ENCODE measurements at regions of chr9 and their contacts with region 1.

Region 1: DNA sequence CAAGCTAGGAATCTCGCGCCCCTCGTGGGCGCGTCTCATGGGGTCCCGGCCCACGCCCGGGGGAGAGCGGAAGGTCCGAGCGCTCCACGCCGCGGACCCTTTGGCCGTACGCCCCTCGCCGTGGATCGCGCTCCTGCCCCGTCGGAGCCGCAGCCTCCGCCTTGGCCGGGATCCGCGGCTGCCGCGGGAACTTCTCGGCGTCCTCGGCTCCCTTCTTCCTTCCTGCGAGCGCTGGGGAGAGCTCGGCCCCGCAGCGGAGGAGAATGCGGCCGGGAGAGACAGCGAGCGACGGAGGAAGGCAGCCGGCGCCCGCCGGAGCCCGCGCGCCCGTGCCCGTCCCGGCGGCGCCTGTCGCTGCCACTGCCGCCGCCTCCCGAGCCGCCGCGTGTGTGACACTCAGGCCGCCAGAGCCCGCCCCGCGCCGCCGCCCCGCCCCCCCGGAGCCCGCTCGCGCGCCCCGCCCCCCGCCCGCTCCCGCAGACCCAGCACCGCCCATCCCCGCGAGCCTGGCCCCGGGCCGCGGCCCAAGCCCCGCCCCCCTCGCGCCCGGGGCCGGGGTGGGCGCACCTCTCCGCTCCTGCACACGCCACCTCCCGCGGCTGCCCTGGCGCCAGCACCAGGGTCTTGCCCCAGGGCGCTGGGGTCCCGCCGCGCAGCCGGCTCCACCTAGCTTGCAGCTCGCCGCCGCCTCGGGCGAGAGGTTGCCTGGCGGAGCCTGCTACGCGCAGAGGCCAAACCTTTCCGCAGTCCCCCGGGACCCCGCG is at the start of gene SHB:
- DNase-seq: peak; percentile 54 to 80 (median 75)
- ATAC-seq: peak; percentile 89
- H3K4me3 ChIP-seq: peak within 1 kb of the TSS; percentile 83
- H3K4me3 Mint-ChIP-seq: peak within 1 kb of the TSS; percentile 76 to 96 (median 88)
- H3K27ac ChIP-seq: peak within 1 kb of the TSS; percentile 76
- H3K27ac Mint-ChIP-seq: peak within 1 kb of the TSS in 8 of 9 donors; percentile 44 to 81 (median 73)
- H3K4me1 ChIP-seq: peaks cover 6 to 18% of the 10 kb centered on the region in 2 donors
- H3K4me1 Mint-ChIP-seq: peaks cover 5 to 39% (median 33%) of the 10 kb centered on the region in 7 donors
- H3K27me3 ChIP-seq: no peaks in the 10 kb centered on the region
- H3K27me3 Mint-ChIP-seq: peaks cover 0 to 58% (median 0%) of the 10 kb centered on the region in 5 donors
- total RNA-seq, gene SHB: 0.29 to 2.0 (median 0.81) TPM

Region 2: DNA sequence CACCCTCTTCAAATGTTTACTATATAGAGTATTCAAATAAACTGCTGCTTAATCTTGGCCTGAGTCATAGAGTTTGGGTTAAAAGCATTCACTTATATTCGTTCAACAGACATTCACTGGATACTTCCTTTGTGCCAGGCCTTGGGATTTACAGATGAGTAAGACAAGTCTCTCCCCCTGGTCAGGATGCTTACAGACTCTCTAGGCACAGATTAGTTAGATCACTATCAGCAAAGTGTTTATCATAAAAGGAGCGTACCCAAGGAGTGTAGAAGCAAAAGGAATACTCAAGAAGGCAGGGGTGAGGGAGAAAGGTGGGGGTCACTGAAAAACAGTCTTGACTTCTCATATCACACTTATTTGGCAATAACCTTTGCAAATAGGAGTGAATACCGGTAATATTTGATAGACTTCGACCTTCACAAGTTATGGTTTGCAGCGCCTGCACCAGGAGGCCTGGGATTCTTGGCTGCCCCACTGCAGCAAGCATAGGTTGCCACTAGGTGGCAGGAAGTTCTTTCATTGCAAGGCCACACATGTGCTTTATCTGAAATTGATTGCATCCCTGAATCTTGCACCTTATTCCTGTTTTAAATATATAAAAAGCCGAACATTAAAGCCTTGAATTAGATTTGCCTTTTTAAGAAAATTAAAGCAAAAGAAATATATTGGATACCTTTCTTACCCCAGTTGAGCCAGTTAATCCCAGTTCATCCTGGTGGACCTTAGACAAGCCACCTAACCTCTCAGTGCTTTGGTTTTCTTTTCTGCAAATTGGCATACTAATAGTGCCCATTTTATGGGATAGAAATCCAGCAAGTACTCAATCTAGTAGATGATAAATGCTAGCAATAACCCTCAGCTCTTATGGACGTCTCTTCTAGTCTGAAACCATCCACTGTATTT is 321.9 kb before region 1 on chr9:
- CTCF ChIA-PET with region 1: no interaction called
- POLR2A ChIA-PET with region 1: no interaction called
- intact Hi-C with region 1: loop called (anchors 5 to 10 kb)
- DNase-seq: peak in 8 of 9 donors; percentile 12 to 54 (median 39)
- ATAC-seq: peak; percentile 88
- H3K4me3 ChIP-seq: no peak overlapping the region
- H3K4me3 Mint-ChIP-seq: no peak overlapping the region
- H3K27ac ChIP-seq: no peak overlapping the region
- H3K27ac Mint-ChIP-seq: peak overlapping the region in 2 of 9 donors; percentile 59 to 62
- H3K4me1 ChIP-seq: no peaks in the 10 kb centered on the region
- H3K4me1 Mint-ChIP-seq: peaks cover 0 to 5% (median 4%) of the 10 kb centered on the region in 7 donors
- H3K27me3 ChIP-seq: no peaks in the 10 kb centered on the region
- H3K27me3 Mint-ChIP-seq: no peaks in the 10 kb centered on the region

Region 3: DNA sequence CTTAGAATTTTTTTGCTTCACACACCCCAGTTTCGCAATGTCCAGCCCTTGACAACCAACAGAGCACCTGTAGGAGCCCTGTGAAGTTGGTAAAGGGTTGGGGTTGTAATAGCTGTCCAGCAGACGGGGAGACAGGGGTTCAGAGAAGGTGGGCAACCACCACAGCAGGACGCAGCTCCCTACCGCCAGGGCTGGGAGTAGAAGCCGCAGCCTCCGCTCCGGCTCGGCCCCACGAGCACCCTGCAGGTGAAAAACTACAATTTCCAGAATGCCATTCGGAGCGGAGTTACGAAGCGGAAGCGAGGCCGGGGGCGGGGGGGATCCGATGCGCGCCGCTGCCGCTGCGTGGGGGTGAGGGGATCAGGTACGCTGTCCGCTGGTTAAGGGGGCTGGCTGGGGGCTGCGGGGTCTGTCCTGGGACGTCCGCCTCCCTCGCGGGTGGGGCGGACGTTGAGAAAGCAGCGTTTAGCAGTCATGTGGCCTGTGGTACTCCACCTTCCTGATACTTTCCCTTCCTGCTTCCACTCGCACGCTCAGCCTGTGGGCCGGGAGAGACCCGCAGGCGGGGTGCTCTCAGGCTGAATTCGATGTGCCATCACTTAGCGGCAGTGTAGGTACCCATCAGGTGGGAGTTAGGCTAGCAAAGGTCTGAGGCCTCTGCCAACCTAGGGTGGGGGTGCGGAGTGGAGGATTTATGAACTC is 315.4 kb before region 1 on chr9 and contains the start of gene TRMT10B:
- CTCF ChIA-PET with region 1: no interaction called
- POLR2A ChIA-PET with region 1: no interaction called
- intact Hi-C with region 1: loop called (anchors 5 to 10 kb)
- DNase-seq: peak; percentile 50 to 78 (median 70)
- ATAC-seq: peak; percentile 95
- H3K4me3 ChIP-seq: peak within 1 kb of the TSS; percentile 92
- H3K4me3 Mint-ChIP-seq: peak within 1 kb of the TSS; percentile 87 to 98 (median 96)
- H3K27ac ChIP-seq: peak within 1 kb of the TSS; percentile 87
- H3K27ac Mint-ChIP-seq: peak within 1 kb of the TSS; percentile 68 to 95 (median 92)
- H3K4me1 ChIP-seq: peaks cover 9 to 11% of the 10 kb centered on the region in 2 donors
- H3K4me1 Mint-ChIP-seq: peaks cover 26 to 52% (median 33%) of the 10 kb centered on the region in 7 donors
- H3K27me3 ChIP-seq: no peaks in the 10 kb centered on the region
- H3K27me3 Mint-ChIP-seq: no peaks in the 10 kb centered on the region
- total RNA-seq, gene TRMT10B: 16.0 to 28.9 (median 18.5) TPM

Region 4: GRCh38 chr9:37984672-37985611 is 84.1 kb before region 1 on chr9:
- CTCF ChIA-PET with region 1: no interaction called
- POLR2A ChIA-PET with region 1: no interaction called
- intact Hi-C with region 1: no loop called
- DNase-seq: no peak
- ATAC-seq: peak; percentile 14
- H3K4me3 ChIP-seq: no peak overlapping the region
- H3K4me3 Mint-ChIP-seq: peak overlapping the region in 1 of 10 donors; percentile 35
- H3K27ac ChIP-seq: no peak overlapping the region
- H3K27ac Mint-ChIP-seq: peak overlapping the region in 1 of 9 donors; percentile 30
- H3K4me1 ChIP-seq: no peaks in the 10 kb centered on the region
- H3K4me1 Mint-ChIP-seq: peaks cover 0 to 5% (median 0%) of the 10 kb centered on the region in 7 donors
- H3K27me3 ChIP-seq: no peaks in the 10 kb centered on the region
- H3K27me3 Mint-ChIP-seq: peaks cover 0 to 3% (median 0%) of the 10 kb centered on the region in 5 donors

Region 5: GRCh38 chr9:38010918-38011704 is 57.9 kb before region 1 on chr9:
- CTCF ChIA-PET with region 1: no interaction called
- POLR2A ChIA-PET with region 1: no interaction called
- intact Hi-C with region 1: loop called in 1 of 2 experiments (anchors 5 kb)
- DNase-seq: no peak
- ATAC-seq: no peak
- H3K4me3 ChIP-seq: no peak overlapping the region
- H3K4me3 Mint-ChIP-seq: no peak overlapping the region
- H3K27ac ChIP-seq: no peak overlapping the region
- H3K27ac Mint-ChIP-seq: no peak overlapping the region
- H3K4me1 ChIP-seq: no peaks in the 10 kb centered on the region
- H3K4me1 Mint-ChIP-seq: peaks cover 0 to 17% (median 9%) of the 10 kb centered on the region in 7 donors
- H3K27me3 ChIP-seq: no peaks in the 10 kb centered on the region
- H3K27me3 Mint-ChIP-seq: no peaks in the 10 kb centered on the region

Region 6: DNA sequence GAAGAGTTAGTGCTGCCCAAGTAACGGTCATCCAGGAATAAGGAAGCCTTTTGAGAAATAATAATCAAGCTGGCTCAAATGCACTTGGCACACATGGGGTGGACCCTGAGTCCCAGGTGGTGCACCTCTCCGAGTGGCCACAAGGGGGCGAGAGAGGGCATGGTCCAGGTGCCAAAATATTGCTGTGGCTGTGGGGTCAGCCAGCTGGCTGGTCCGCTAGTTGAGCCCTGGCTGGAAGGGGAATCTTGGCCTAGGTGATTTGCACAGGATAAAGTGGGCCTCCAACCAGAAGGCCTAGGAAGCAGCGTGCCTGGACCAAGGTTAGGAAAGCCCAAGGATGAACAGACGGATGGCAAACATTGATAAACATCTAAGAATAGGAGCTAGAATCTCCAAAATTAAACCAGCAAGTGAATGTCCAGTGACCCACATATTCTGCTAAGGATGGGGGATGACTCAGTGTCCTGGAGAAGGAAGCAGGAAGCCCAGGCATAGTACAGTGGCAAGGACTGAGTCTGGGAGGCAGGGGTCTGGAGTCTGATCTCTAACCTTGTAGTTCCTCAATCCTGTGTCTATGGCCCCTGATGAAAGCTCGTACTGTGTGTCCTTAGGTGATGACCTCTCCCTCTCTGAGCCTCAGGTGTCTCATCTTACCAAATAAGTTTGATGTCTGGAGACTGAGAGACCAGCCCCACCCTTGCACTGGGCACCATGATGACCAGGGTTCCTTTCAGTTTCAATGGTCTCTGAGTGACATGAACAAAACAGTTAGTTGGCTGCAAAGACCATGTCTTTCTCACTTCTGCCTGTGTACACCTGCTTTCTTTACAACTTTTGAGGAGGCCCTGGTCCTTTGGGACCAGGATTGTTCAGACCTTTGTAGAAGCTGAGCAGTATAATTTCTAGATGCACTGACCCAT is 19.2 kb after region 1 on chr9:
- CTCF ChIA-PET with region 1: no interaction called
- POLR2A ChIA-PET with region 1: interaction called, 3 read pairs
- intact Hi-C with region 1: loop called in 1 of 2 experiments (anchors 1 kb)
- DNase-seq: peak in 8 of 9 donors; percentile 26 to 79 (median 61)
- ATAC-seq: peak; percentile 91
- H3K4me3 ChIP-seq: no peak overlapping the region
- H3K4me3 Mint-ChIP-seq: no peak overlapping the region
- H3K27ac ChIP-seq: no peak overlapping the region
- H3K27ac Mint-ChIP-seq: peak overlapping the region in 1 of 9 donors; percentile 3
- H3K4me1 ChIP-seq: no peaks in the 10 kb centered on the region
- H3K4me1 Mint-ChIP-seq: peaks cover 0 to 4% (median 0%) of the 10 kb centered on the region in 7 donors
- H3K27me3 ChIP-seq: no peaks in the 10 kb centered on the region
- H3K27me3 Mint-ChIP-seq: peaks cover 0 to 21% (median 7%) of the 10 kb centered on the region in 5 donors

Region 7: GRCh38 chr9:38392235-38393127 is 323.4 kb after region 1 on chr9 and contains the start of gene ALDH1B1:
- CTCF ChIA-PET with region 1: no interaction called
- POLR2A ChIA-PET with region 1: no interaction called
- intact Hi-C with region 1: loop called in 1 of 2 experiments (anchors 10 kb)
- DNase-seq: peak; percentile 18 to 83 (median 35)
- ATAC-seq: peak; percentile 97
- H3K4me3 ChIP-seq: peak within 1 kb of the TSS; percentile 80
- H3K4me3 Mint-ChIP-seq: peak within 1 kb of the TSS; percentile 85 to 98 (median 93)
- H3K27ac ChIP-seq: peak within 1 kb of the TSS; percentile 59
- H3K27ac Mint-ChIP-seq: peak within 1 kb of the TSS; percentile 57 to 91 (median 87)
- H3K4me1 ChIP-seq: peaks cover 7% of the 10 kb centered on the region in 2 donors
- H3K4me1 Mint-ChIP-seq: peaks cover 12 to 26% (median 17%) of the 10 kb centered on the region in 7 donors
- H3K27me3 ChIP-seq: no peaks in the 10 kb centered on the region
- H3K27me3 Mint-ChIP-seq: peaks cover 0 to 23% (median 0%) of the 10 kb centered on the region in 5 donors
- total RNA-seq, gene ALDH1B1: 1.9 to 13.4 (median 3.8) TPM

Measured in naive thymus-derived CD4-positive, alpha-beta T cell (primary cell).